ENCODE measurements at regions of chr18 and their contacts with region 1.

Region 1: GRCh38 chr18:3442919-3443318 is 7.1 kb upstream of the TGIF1 start:
- DNase-seq: no peak
- H3K4me3 ChIP-seq: no peak overlapping the region
- H3K27ac ChIP-seq: no peak overlapping the region
- H3K4me1 ChIP-seq: no peaks in the 10 kb centered on the region
- H3K27me3 ChIP-seq: no peaks in the 10 kb centered on the region
- CTCF ChIP-seq: no peak
- POLR2A ChIP-seq: no peak

Region 2: DNA sequence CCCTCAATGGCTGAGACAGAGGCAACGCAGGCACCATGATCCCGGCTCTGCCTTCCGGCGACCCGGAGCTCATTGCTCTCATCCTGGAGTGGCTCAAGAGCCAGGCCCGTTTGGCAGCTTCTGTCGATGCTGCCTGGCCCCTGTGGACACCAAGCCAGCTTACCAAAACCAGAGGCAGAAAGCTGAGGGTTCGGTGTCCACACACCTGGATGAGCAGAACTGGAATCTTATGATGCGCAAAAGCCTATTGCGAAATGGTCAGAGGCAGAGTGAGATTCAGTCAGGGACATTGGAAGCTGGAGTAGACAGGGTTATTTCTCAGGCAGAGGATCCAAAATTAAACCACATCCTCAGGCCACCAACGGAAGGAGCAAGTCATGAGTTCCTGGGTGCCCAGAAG is 27.8 kb before region 1 on chr18:
- intact Hi-C with region 1: loop called (anchors 2 kb)
- DNase-seq: no peak
- H3K4me3 ChIP-seq: no peak overlapping the region
- H3K27ac ChIP-seq: no peak overlapping the region
- H3K4me1 ChIP-seq: no peaks in the 10 kb centered on the region
- H3K27me3 ChIP-seq: no peaks in the 10 kb centered on the region
- CTCF ChIP-seq: no peak
- POLR2A ChIP-seq: no peak

Measured in breast epithelium (tissue), 4 donors.